Right cardiac atrium (tissue), 5 donors: ENCODE measurements at regions of chr1 and their contacts with region 1.

Region 1: GRCh38 chr1:203368624-203369451 is 17.9 kb upstream of the FMOD start:
- DNase-seq: peak; percentile 73 to 85 (median 76)
- ATAC-seq: peak; percentile 87 to 94
- H3K4me3 ChIP-seq: no peak overlapping the region
- H3K27ac ChIP-seq: peak overlapping the region; percentile 38
- H3K4me1 ChIP-seq: peaks cover 11% of the 10 kb centered on the region
- H3K27me3 ChIP-seq: no peaks in the 10 kb centered on the region

Region 2: GRCh38 chr1:203440771-203441170 is 71.9 kb after region 1 on chr1:
- intact Hi-C with region 1: loop called in 2 of 4 experiments (anchors 5 to 10 kb)
- DNase-seq: peak; percentile 79 to 94 (median 92)
- ATAC-seq: peak; percentile 93 to 95
- H3K4me3 ChIP-seq: no peak overlapping the region
- H3K27ac ChIP-seq: no peak overlapping the region
- H3K4me1 ChIP-seq: no peaks in the 10 kb centered on the region
- H3K27me3 ChIP-seq: no peaks in the 10 kb centered on the region

Region 3: DNA sequence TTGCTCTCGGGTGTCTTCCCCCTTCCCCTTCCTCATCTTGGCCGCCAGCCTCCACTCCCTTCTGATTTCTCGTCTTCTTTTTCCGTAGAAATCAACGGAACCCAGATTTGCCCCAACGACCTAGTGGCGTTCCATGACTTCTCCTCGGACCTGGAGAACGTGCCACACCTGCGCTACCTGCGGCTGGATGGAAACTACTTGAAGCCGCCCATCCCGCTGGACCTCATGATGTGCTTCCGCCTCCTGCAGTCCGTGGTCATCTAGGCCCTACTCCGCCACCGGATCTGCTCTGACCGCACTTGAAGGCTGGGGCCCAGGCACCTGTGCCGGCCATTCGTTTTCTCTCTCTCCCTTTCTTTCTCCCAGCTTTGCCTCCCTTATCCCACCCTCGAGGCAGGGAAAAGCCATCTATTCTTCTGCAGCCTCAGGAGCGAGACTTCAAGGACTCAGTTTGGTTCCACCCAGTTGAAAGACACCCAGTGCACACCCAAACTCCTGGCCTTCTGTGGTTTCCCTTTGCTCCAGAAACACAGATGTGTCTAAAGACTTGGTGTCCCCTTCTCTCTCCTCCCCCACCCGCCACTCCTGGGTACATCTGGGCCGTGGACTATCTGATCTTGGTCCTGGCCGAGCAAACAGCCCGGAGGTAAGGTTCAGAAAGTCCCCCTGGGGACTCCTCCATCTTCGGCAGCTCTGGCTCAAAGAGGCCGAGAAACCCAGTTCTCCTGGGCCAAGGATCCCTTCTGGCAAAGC is 118.0 kb after region 1 on chr1:
- intact Hi-C with region 1: loop called in 3 of 4 experiments (anchors 5 kb)
- DNase-seq: peak in 2 of 3 donors; percentile 57 to 70
- ATAC-seq: no peak
- H3K4me3 ChIP-seq: no peak overlapping the region
- H3K27ac ChIP-seq: peak overlapping the region; percentile 66
- H3K4me1 ChIP-seq: no peaks in the 10 kb centered on the region
- H3K27me3 ChIP-seq: no peaks in the 10 kb centered on the region

Region 4: DNA sequence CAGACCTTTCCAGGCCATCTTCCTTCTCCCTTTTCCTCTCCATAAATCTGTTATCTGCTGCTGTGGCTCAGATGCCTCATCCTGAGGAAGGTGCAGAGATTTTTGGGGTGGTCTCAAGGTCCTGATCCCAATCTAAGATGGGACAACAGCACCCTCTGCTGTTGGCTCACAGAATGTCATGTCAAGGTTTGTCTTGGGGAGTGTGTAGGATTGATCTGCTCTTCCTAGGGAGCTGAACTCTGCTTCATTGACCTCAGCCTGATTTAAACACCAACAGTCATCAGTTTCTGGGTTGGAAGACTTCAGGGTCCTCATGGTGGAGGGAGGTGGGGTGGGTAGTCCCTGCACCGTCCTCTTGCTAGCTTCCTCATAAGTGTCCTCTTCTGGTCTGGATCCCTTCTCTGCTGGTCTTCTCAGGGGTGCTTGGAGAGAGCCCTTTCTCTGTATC is 333.3 kb after region 1 on chr1:
- intact Hi-C with region 1: loop called in 1 of 4 experiments (anchors 10 kb)
- DNase-seq: peak; percentile 33 to 67 (median 56)
- ATAC-seq: peak; percentile 57 to 68
- H3K4me3 ChIP-seq: no peak overlapping the region
- H3K27ac ChIP-seq: no peak overlapping the region
- H3K4me1 ChIP-seq: peaks cover under 1% of the 10 kb centered on the region
- H3K27me3 ChIP-seq: no peaks in the 10 kb centered on the region